PC-3 (cell line): ENCODE measurements at regions of chr1 and their contacts with region 1.

Region 1: GRCh38 chr1:64956733-64957441 is 9.5 kb downstream of the JAK1 start:
- DNase-seq: no peak
- ATAC-seq: no peak
- H3K4me3 ChIP-seq: no peak overlapping the region
- H3K27ac ChIP-seq: no peak overlapping the region
- H3K4me1 ChIP-seq: peaks cover 13% of the 10 kb centered on the region
- H3K27me3 ChIP-seq: no peaks in the 10 kb centered on the region
- CTCF ChIP-seq: no peak

Region 2: GRCh38 chr1:64932962-64933295 is 24.0 kb before region 1 on chr1:
- CTCF ChIA-PET with region 1: no interaction called
- POLR2A ChIA-PET with region 1: interaction called, 15 read pairs
- intact Hi-C with region 1: no loop called
- DNase-seq: no peak
- ATAC-seq: no peak
- H3K4me3 ChIP-seq: peak overlapping the region; percentile 16; the same call in 1 of the 2 replicates
- H3K27ac ChIP-seq: peak overlapping the region; percentile 54
- H3K4me1 ChIP-seq: peaks cover 21% of the 10 kb centered on the region
- H3K27me3 ChIP-seq: no peaks in the 10 kb centered on the region
- CTCF ChIP-seq: no peak

Region 3: DNA sequence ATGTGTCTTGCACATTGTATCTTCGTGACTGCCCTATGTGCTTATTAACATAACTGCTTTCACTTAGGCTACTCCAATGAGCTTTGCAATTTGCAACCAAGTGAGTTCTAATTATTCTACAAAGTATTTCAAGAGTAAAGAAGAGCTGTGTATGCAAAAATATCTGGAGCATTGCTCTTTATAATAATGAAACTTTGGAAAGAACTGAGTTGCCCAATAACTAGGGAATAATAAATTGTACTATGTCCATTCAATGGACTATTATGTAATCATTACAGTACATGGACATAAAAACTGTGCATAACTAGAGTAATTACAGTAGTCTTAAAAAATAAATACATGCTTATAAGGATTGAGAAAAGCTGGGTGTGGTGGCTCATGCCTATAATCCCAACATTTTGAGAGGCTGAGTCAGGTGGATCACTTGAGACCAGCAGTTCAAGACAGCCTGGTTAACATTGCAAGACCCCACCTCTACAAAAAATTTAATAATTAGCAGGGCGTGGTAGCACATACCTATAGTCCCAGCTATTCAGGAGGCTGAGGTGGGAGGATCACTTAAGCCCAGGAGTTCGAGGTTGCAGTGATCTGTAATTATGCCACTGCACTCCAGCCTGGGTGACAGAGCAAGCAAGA is 79.8 kb after region 1 on chr1:
- CTCF ChIA-PET with region 1: no interaction called
- POLR2A ChIA-PET with region 1: no interaction called
- intact Hi-C with region 1: no loop called
- DNase-seq: peak; percentile 32
- ATAC-seq: no peak
- H3K4me3 ChIP-seq: no peak overlapping the region
- H3K27ac ChIP-seq: no peak overlapping the region
- H3K4me1 ChIP-seq: no peaks in the 10 kb centered on the region
- H3K27me3 ChIP-seq: no peaks in the 10 kb centered on the region
- CTCF ChIP-seq: no peak